ENCODE measurements at regions of chr13 and their contacts with region 1.

Region 1: DNA sequence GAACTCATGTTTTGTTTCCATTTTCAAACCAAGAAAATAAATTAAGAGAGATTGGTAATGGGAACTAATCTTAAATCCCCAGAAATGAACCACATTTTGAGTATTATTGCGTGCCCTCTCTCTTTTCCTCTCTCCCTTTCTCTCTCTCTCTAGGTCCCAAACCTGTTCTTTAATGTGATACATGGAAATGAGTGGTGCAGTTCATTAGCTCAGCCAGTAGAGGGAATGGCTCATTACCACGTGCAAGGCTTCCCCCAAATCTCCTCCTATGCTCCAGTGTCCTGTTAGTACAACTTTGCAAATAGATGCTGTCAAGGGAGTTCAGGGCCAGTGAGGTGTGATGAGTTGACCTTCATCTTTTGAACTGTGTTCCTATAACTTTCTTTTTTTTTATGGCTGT is 178.4 kb downstream of the FGF9 start:
- DNase-seq: peak in 1 of 2 donors; percentile 67
- ATAC-seq: peak in 1 of 3 donors; percentile 72
- H3K4me3 ChIP-seq: no peak overlapping the region
- H3K4me3 Mint-ChIP-seq: no peak overlapping the region
- H3K27ac ChIP-seq: no peak overlapping the region
- H3K27ac Mint-ChIP-seq: no peak overlapping the region
- H3K4me1 ChIP-seq: no peaks in the 10 kb centered on the region
- H3K4me1 Mint-ChIP-seq: no peaks in the 10 kb centered on the region
- H3K27me3 ChIP-seq: no peaks in the 10 kb centered on the region
- H3K27me3 Mint-ChIP-seq: peaks cover 0 to 3% of the 10 kb centered on the region in 2 donors
- CTCF ChIP-seq: peak; percentile 54

Region 2: GRCh38 chr13:23020223-23020843 is 1171.0 kb after region 1 on chr13:
- intact Hi-C with region 1: loop called (anchors 10 kb)
- DNase-seq: peak in 1 of 2 donors; percentile 63
- ATAC-seq: peak; percentile 61 to 86 (median 72)
- H3K4me3 ChIP-seq: no peak overlapping the region
- H3K4me3 Mint-ChIP-seq: no peak overlapping the region
- H3K27ac ChIP-seq: no peak overlapping the region
- H3K27ac Mint-ChIP-seq: no peak overlapping the region
- H3K4me1 ChIP-seq: no peaks in the 10 kb centered on the region
- H3K4me1 Mint-ChIP-seq: no peaks in the 10 kb centered on the region
- H3K27me3 ChIP-seq: no peaks in the 10 kb centered on the region
- H3K27me3 Mint-ChIP-seq: no peaks in the 10 kb centered on the region
- CTCF ChIP-seq: peak; percentile 72

Measured in natural killer cell (primary cell).